ENCODE measurements at regions of chr16 and their contacts with region 1.

Region 1: DNA sequence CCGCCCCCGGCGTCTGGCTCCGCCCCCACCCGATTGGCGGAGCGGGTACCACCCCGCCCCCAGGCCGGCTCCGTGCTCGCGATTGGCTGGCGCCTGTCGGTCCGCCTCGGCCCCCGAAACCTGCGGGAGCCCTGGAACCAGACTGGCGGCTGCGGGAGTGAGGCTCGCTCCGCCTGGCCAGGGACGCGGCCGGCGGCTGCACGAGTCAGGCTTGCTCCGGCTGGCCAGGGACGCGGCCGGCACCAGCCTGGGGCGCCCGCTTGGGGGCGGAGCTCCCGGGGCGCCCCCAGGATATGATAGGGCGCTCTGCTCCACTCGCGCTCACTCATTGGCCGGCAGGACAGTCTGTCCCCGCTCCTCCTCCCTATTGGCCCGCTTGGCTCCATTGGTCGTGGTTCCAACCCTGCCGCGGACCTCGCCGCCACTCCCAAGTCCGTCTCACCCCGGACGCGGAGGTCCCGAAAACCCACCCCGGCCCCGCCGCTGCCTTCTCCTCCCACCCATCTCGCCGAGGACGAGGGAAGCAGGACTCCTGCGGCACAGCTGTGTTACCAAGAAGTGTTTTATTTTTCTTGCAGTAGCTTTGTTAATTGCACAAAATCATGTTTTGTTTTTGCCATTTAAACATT is 340 bp upstream of the ROGDI start:
- DNase-seq: peak; percentile 87
- ATAC-seq: peak; percentile 92
- H3K4me3 ChIP-seq: peak overlapping the region; percentile 88 to 90 (median 90)
- H3K27ac ChIP-seq: peak overlapping the region; percentile 83
- H3K4me1 ChIP-seq: peaks cover 24% of the 10 kb centered on the region
- H3K27me3 ChIP-seq: no peaks in the 10 kb centered on the region
- CTCF ChIP-seq: no peak
- EP300 ChIP-seq: no peak
- POLR2A ChIP-seq: peak in 1 of 2 experiments; percentile 42; a peak in 1 of 4 replicates
- RAD21 ChIP-seq: peak; percentile 41; the same call in 1 of the 2 replicates

Region 2: GRCh38 chr16:4734063-4734729 is 68.6 kb before region 1 on chr16 and contains the starts of genes ANKS3 and DNAAF8:
- CTCF ChIA-PET with region 1: no interaction called
- POLR2A ChIA-PET with region 1: interaction called, 5 read pairs
- in situ Hi-C with region 1: no loop called
- intact Hi-C with region 1: loop called (anchors 5 kb)
- DNase-seq: peak; percentile 96
- ATAC-seq: peak; percentile 96
- H3K4me3 ChIP-seq: peak within 1 kb of the TSS; percentile 98 to 100 (median 100)
- H3K27ac ChIP-seq: peak within 1 kb of the TSS; percentile 80
- H3K4me1 ChIP-seq: peaks cover 20% of the 10 kb centered on the region
- H3K27me3 ChIP-seq: no peaks in the 10 kb centered on the region; a peak in 2 of 5 replicates
- CTCF ChIP-seq: peak; percentile 12; the same call in 1 of the 2 replicates
- EP300 ChIP-seq: no peak
- POLR2A ChIP-seq: peak; percentile 46 to 68
- RAD21 ChIP-seq: peak; percentile 48; the same call in 1 of the 2 replicates
- total RNA-seq, gene ANKS3: 6.6 and 15.9 TPM in 2 replicates
- total RNA-seq, gene DNAAF8: 0.38 and 0.44 TPM in 2 replicates

Region 3: DNA sequence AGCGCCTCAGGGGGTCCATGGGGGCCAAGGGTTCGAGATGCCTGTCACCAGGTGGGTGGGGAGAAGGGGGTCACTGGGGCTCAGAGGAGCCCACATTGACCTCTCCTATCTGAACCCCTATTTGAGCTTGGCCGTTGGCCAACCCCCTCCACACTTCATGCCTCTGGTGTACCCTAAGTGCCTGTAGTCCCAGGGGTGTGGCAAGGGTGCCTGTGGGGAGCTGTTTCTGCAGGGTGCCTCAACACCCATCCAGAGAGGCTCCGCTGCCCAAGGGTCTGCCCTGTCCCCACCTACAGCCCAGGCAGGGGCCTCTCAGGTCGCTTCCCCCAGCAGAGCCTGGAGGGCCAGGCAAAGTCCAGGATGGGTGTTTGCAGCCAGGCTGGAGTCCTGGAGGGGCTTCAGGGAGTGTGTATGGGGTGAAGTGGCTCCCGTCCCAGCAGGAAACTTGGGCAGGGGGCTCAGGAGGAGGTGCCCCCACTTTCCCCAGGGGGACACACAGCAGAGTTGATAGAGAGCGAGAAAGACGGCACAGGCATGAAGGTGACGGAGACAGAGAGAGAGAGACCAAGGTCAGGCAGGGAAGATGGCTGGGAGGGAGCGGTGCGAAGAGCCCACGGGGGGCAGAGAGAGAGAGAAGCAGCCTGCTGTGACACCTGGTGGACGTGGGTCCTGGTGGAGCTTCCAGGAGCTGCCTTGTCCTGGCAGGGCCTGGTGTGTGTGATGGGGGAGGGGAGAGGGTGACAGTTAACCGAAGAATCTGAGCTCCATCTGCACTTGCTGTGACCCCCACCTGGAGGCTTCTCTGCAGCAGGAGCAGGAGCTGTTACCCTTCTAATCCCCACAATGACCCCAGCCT is 14.9 kb before region 1 on chr16 and contains the start of gene SEPTIN12:
- CTCF ChIA-PET with region 1: no interaction called
- POLR2A ChIA-PET with region 1: interaction called, 17 read pairs
- in situ Hi-C with region 1: no loop called
- intact Hi-C with region 1: no loop called
- DNase-seq: no peak
- ATAC-seq: peak; percentile 69
- H3K4me3 ChIP-seq: peak within 1 kb of the TSS; percentile 23 to 67 (median 43)
- H3K27ac ChIP-seq: peak within 1 kb of the TSS; percentile 36
- H3K4me1 ChIP-seq: peaks cover 85% of the 10 kb centered on the region
- H3K27me3 ChIP-seq: no peaks in the 10 kb centered on the region; a peak in 1 of 5 replicates
- CTCF ChIP-seq: no peak; the same call in 1 of the 2 replicates
- EP300 ChIP-seq: no peak
- POLR2A ChIP-seq: no peak
- RAD21 ChIP-seq: no peak
- total RNA-seq, gene SEPTIN12: 0.22 TPM in 1 of 2 replicates, not detected in the other

Measured in HepG2 (cell line).